CD8-positive, alpha-beta T cell (primary cell): ENCODE measurements at regions of chr1 and their contacts with region 1.

Region 1: GRCh38 chr1:109548321-109549267 is at the start of gene GNAI3:
- DNase-seq: peak; percentile 90 to 98 (median 96)
- ATAC-seq: peak; percentile 85
- H3K4me3 ChIP-seq: peak within 1 kb of the TSS; percentile 74 to 98
- H3K4me3 Mint-ChIP-seq: peak within 1 kb of the TSS; percentile 98
- H3K27ac ChIP-seq: peak within 1 kb of the TSS; percentile 89 to 97
- H3K27ac Mint-ChIP-seq: peak within 1 kb of the TSS; percentile 99
- H3K4me1 ChIP-seq: peaks cover 28% of the 10 kb centered on the region
- H3K4me1 Mint-ChIP-seq: peaks cover 60% of the 10 kb centered on the region
- H3K27me3 ChIP-seq: no peaks in the 10 kb centered on the region
- H3K27me3 Mint-ChIP-seq: no peaks in the 10 kb centered on the region
- CTCF ChIP-seq: no peak
- total RNA-seq, gene GNAI3: 6.8 to 7.1 TPM

Region 2: DNA sequence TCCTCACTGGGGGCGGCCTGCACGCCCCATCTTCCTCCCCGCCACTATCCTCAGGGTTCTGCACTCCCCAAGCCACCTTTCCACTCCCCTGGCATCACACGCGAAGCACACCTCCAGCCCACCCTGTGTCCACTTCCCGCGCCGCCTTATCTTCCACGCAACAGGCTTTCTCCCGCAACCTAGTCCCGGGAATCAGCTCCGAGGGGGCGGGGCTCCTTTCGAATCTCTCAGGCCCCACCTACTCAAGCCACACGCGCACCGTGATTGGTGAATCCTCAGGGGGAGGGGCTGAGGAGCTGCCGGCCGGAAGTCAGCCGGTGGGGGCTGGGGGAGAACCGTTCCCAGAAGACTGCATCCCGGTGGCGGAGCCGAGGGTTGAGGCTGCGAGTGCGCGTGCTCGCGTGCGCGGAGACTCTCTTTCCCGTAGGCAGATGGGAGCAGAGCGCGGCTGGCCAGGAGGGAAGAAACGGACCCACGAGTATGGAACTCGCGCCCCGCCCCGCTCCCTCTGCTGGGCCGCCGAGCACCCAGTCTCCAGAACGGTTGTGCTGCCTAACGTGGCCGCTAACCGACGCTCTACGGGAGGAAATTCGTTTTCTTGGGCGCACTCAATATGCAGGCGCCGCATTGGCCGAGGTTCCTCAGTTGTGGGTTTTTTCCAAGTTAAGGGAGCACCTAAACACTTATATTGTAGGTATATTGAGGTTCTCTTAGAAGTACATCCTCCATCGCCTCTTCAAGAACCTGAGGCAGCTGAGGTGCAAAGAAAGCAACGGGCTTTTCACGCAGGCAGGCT is 265.4 kb before region 1 on chr1 and contains the start of gene PSRC1:
- CTCF ChIA-PET with region 1: no interaction called
- POLR2A ChIA-PET with region 1: no interaction called
- intact Hi-C with region 1: loop called in 1 of 2 experiments (anchors 5 kb)
- DNase-seq: peak; percentile 73 to 94 (median 87)
- ATAC-seq: peak; percentile 94
- H3K4me3 ChIP-seq: peak within 1 kb of the TSS; percentile 72 to 82
- H3K4me3 Mint-ChIP-seq: peak within 1 kb of the TSS; percentile 93
- H3K27ac ChIP-seq: peak within 1 kb of the TSS; percentile 46 to 79
- H3K27ac Mint-ChIP-seq: peak within 1 kb of the TSS; percentile 88
- H3K4me1 ChIP-seq: peaks cover 12% of the 10 kb centered on the region
- H3K4me1 Mint-ChIP-seq: peaks cover 16% of the 10 kb centered on the region
- H3K27me3 ChIP-seq: no peaks in the 10 kb centered on the region
- H3K27me3 Mint-ChIP-seq: no peaks in the 10 kb centered on the region
- CTCF ChIP-seq: peak; percentile 40
- total RNA-seq, gene PSRC1: not detected

Region 3: GRCh38 chr1:109493805-109494539 is 54.6 kb before region 1 on chr1 and contains the start of gene CYB561D1:
- CTCF ChIA-PET with region 1: interaction called, 1,903 read pairs
- POLR2A ChIA-PET with region 1: interaction called, 5 read pairs
- intact Hi-C with region 1: no loop called
- DNase-seq: peak; percentile 79 to 95 (median 88)
- ATAC-seq: peak; percentile 90
- H3K4me3 ChIP-seq: peak within 1 kb of the TSS; percentile 94 to 95
- H3K4me3 Mint-ChIP-seq: peak within 1 kb of the TSS; percentile 95
- H3K27ac ChIP-seq: peak within 1 kb of the TSS; percentile 53 to 58
- H3K27ac Mint-ChIP-seq: peak within 1 kb of the TSS; percentile 85
- H3K4me1 ChIP-seq: peaks cover 49% of the 10 kb centered on the region
- H3K4me1 Mint-ChIP-seq: peaks cover 52% of the 10 kb centered on the region
- H3K27me3 ChIP-seq: no peaks in the 10 kb centered on the region
- H3K27me3 Mint-ChIP-seq: no peaks in the 10 kb centered on the region
- CTCF ChIP-seq: peak; percentile 88
- total RNA-seq, gene CYB561D1: 10.2 to 12.3 TPM

Region 4: GRCh38 chr1:109643385-109644230 is 95.0 kb after region 1 on chr1:
- CTCF ChIA-PET with region 1: interaction called, 82 read pairs
- POLR2A ChIA-PET with region 1: interaction called, 7 read pairs
- intact Hi-C with region 1: loop called in 1 of 2 experiments (anchors 1 kb)
- DNase-seq: peak; percentile 73 to 94 (median 86)
- ATAC-seq: peak; percentile 94
- H3K4me3 ChIP-seq: no peak overlapping the region
- H3K4me3 Mint-ChIP-seq: no peak overlapping the region
- H3K27ac ChIP-seq: no peak overlapping the region
- H3K27ac Mint-ChIP-seq: peak overlapping the region; percentile 45
- H3K4me1 ChIP-seq: peaks cover 13% of the 10 kb centered on the region
- H3K4me1 Mint-ChIP-seq: peaks cover 6% of the 10 kb centered on the region
- H3K27me3 ChIP-seq: no peaks in the 10 kb centered on the region
- H3K27me3 Mint-ChIP-seq: peaks cover 4% of the 10 kb centered on the region
- CTCF ChIP-seq: peak; percentile 81

Region 5: DNA sequence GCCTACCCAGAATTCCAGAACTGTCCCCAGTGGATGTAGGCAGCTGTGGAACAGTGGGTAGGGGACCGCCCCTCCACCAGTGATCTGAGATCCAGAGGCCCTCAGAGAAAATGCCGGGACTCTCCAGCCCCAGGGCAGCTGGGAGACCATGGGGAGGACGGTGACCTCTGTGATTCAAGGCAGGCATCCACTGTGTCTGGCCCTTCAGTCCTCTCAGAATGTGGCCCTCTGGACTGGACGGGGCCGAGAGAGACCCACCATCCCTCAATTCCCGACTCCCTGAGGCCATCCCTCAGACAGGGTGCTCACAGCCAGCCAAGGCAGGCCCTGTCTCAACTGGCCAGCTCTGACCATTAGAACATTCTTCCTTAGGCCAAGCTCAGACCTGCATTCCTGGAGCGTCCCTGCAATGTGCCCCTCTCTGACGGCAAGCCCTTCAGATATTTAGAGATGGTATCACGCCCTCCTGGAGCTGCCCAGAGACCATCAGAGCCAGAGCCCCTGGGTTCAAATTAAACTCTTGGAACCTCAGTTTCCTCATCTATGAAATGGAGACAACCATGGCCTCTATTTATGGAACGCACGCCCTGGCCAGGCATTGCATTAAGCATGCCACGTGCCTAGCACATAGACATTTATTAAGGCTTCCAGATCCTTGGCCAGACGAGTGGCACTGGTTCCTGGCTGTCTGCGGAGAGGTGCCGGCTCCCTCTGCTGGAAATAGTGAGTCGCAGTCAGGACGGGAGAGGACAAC is 224.7 kb after region 1 on chr1:
- CTCF ChIA-PET with region 1: interaction called, 40 read pairs
- POLR2A ChIA-PET with region 1: interaction called, 3 read pairs
- intact Hi-C with region 1: loop called in 1 of 2 experiments (anchors 1 kb)
- DNase-seq: peak; percentile 29 to 83 (median 67)
- ATAC-seq: peak; percentile 90
- H3K4me3 ChIP-seq: no peak overlapping the region
- H3K4me3 Mint-ChIP-seq: no peak overlapping the region
- H3K27ac ChIP-seq: no peak overlapping the region
- H3K27ac Mint-ChIP-seq: no peak overlapping the region
- H3K4me1 ChIP-seq: peaks cover 3% of the 10 kb centered on the region
- H3K4me1 Mint-ChIP-seq: peaks cover 8% of the 10 kb centered on the region
- H3K27me3 ChIP-seq: peaks cover 0 to 2% of the 10 kb centered on the region in 2 experiments
- H3K27me3 Mint-ChIP-seq: peaks cover 3% of the 10 kb centered on the region
- CTCF ChIP-seq: peak; percentile 65

Region 6: DNA sequence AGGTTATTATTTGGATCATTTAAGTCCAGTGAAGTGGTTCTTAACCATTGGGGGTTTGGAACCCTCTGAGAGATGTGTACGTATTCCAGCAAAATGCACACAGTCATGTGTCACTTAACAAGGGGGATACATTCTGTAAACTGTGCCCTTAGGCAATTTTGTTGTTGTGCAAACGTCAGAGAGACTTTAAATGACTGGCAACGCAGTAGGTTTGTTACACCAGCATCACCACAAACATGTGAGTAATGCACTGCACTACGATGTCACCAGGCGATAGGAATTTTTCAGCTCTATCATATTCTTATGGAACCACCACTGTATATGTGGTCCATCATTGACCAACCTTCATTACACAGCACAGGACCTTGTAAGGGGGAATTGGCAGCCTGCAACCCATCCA is 447.9 kb after region 1 on chr1:
- CTCF ChIA-PET with region 1: no interaction called
- POLR2A ChIA-PET with region 1: no interaction called
- intact Hi-C with region 1: no loop called
- DNase-seq: no peak
- ATAC-seq: no peak
- H3K4me3 ChIP-seq: no peak overlapping the region
- H3K4me3 Mint-ChIP-seq: no peak overlapping the region
- H3K27ac ChIP-seq: no peak overlapping the region
- H3K27ac Mint-ChIP-seq: no peak overlapping the region
- H3K4me1 ChIP-seq: no peaks in the 10 kb centered on the region
- H3K4me1 Mint-ChIP-seq: peaks cover 18% of the 10 kb centered on the region
- H3K27me3 ChIP-seq: no peaks in the 10 kb centered on the region
- H3K27me3 Mint-ChIP-seq: no peaks in the 10 kb centered on the region
- CTCF ChIP-seq: no peak